ENCODE measurements at regions of chr15 and their contacts with region 1.

Region 1: DNA sequence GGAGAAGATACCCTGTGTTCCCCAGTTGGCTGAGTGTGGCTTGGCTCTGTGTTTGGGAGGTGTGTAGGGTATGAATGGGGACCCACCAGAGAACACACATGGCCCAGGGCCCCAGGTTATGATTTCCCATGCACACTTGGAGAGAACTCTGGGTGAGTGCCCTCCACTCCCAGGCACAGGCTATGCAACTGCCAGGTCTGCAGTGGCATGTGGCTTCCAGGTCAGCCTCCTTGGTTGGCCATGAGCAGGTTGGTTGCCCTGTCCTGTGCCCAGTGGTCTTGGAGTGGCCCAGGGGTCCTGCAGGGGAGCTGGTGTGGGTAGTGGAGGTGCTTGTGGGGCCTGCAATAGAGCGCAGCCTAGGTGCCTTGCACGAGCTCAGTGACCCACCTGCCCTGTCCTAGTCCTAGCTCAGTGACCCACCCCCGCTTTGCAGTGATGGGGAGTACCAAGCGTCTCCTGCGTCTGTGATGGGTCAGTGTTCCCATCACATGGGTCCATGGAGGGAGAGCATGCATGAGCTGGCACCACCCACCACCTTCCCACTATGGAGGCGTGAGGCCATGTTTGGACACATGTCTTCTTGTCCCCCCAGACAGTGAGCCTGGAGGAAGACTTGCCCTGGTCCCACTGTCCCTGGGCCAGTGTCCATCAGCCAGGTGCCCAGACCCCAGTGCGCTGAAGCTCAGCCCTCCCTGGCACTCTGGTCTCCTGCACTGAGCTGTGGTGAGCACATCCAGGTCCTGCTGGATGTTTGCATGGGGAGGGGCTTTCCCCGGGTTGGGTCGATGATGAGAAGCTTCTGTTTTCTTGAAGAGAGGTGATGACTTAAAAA is 217.3 kb downstream of the SNRPN start:
- ATAC-seq: no peak
- H3K4me3 ChIP-seq: no peak overlapping the region
- H3K27ac ChIP-seq: no peak overlapping the region
- H3K4me1 ChIP-seq: no peaks in the 10 kb centered on the region

Region 2: GRCh38 chr15:24659622-24660021 is 512.5 kb before region 1 on chr15:
- in situ Hi-C with region 1: no loop called
- ATAC-seq: no peak
- H3K4me3 ChIP-seq: no peak overlapping the region
- H3K27ac ChIP-seq: no peak overlapping the region
- H3K4me1 ChIP-seq: no peaks in the 10 kb centered on the region

Region 3: GRCh38 chr15:25287823-25288222 is 115.8 kb after region 1 on chr15:
- in situ Hi-C with region 1: no loop called
- ATAC-seq: no peak
- H3K4me3 ChIP-seq: no peak overlapping the region
- H3K27ac ChIP-seq: no peak overlapping the region
- H3K4me1 ChIP-seq: no peaks in the 10 kb centered on the region

Region 4: DNA sequence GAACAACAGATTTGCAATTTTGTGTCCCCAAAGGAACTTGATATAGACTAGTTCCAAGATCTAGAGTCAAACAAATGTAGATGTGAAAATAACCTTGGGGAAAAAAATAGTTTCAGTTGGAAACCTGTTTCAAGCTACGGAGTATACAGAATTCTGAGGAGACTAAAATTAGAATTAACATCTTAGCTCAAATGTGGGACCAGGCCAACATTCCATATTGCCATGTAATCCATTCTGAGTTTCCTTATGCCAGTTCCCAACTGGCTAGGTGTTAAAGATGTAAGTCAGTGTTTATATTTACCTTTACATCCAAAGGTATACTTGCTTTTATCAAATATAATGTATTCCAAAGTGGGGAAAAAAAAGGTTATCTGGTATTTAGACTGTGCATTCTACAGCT is 190.5 kb after region 1 on chr15:
- in situ Hi-C with region 1: no loop called
- ATAC-seq: no peak
- H3K4me3 ChIP-seq: no peak overlapping the region
- H3K27ac ChIP-seq: no peak overlapping the region
- H3K4me1 ChIP-seq: no peaks in the 10 kb centered on the region

Region 5: GRCh38 chr15:25481207-25481859 is 309.3 kb after region 1 on chr15:
- in situ Hi-C with region 1: loop called in 1 of 9 experiments (anchors 25 kb)
- ATAC-seq: peak in 7 of 8 experiments; percentile 62 to 92 (median 82)
- H3K4me3 ChIP-seq: peak overlapping the region in 2 of 5 donors; percentile 11 to 18
- H3K27ac ChIP-seq: peak overlapping the region; percentile 74 to 76
- H3K4me1 ChIP-seq: peaks cover 12 to 17% of the 10 kb centered on the region in 2 donors

Region 6: GRCh38 chr15:25527118-25527517 is 355.0 kb after region 1 on chr15:
- in situ Hi-C with region 1: no loop called
- ATAC-seq: no peak
- H3K4me3 ChIP-seq: no peak overlapping the region
- H3K27ac ChIP-seq: no peak overlapping the region
- H3K4me1 ChIP-seq: peaks cover 2 to 8% of the 10 kb centered on the region in 2 donors

Measured in motor neuron (in vitro differentiated cells).